MCF 10A (cell line): ENCODE measurements at regions of chr16 and their contacts with region 1.

Region 1: GRCh38 chr16:30407102-30407803 is at the start of gene ZNF771:
- DNase-seq: peak; percentile 93
- H3K4me3 Mint-ChIP-seq: peak within 1 kb of the TSS; percentile 81
- H3K27ac Mint-ChIP-seq: peak within 1 kb of the TSS; percentile 33
- H3K4me1 Mint-ChIP-seq: peaks cover 19% of the 10 kb centered on the region
- H3K27me3 Mint-ChIP-seq: peaks cover 11% of the 10 kb centered on the region
- CTCF ChIP-seq: no peak
- total RNA-seq, gene ZNF771: 8.1 and 8.3 TPM in 2 replicates

Region 2: DNA sequence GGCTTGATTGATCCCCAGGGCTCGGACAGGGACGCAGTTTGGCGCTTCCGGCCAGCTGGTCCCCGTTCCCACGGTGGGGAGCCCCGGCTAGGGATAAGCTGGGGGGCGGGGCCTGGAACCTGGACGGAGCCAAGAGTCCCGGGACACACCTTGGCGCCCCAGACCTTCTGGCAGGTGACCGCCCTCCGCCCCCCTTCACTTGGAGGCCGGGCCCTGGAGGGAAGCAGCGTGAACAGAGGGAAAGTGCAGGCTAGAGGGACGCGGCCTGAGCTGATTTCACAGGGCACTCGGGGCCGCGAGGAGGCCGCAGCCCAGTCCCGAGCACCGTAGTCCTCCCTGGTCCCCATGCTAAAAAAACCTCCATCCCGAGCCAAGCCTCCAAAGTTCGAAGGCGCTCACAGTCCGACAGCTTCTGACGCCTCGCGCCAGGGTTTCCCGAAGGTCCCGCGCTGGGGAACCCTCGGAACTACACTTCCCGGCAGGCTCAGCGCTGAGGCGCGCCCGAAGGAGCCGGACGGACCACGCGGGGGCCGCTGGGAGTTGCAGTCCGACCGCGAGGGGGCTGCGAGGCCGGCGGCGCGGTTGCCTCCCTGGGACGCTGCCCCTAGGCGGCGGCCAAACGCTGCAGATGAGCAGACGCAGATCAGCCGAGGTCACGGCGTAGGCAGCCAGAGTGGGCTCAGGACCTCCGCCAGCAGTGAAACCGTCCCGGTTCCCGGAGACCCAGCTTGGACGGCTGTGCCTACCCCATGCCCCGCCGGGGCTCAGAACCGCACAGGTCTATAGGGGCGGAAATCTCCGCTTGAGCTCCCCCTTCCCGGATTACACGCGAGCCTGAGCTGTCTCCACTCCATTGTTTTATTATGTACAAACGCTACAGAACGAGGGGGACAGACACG is 315.5 kb before region 1 on chr16 and contains the start of gene TBX6:
- CTCF ChIA-PET with region 1: interaction called, 3 read pairs
- POLR2A ChIA-PET with region 1: interaction called, 5 read pairs
- intact Hi-C with region 1: loop called (anchors 10 kb)
- DNase-seq: peak; percentile 89
- H3K4me3 Mint-ChIP-seq: peak within 1 kb of the TSS; percentile 79
- H3K27ac Mint-ChIP-seq: peak within 1 kb of the TSS; percentile 57
- H3K4me1 Mint-ChIP-seq: peaks cover 37% of the 10 kb centered on the region
- H3K27me3 Mint-ChIP-seq: no peaks in the 10 kb centered on the region
- CTCF ChIP-seq: peak; percentile 74
- total RNA-seq, gene TBX6: 0.16 and 0.47 TPM in 2 replicates

Region 3: DNA sequence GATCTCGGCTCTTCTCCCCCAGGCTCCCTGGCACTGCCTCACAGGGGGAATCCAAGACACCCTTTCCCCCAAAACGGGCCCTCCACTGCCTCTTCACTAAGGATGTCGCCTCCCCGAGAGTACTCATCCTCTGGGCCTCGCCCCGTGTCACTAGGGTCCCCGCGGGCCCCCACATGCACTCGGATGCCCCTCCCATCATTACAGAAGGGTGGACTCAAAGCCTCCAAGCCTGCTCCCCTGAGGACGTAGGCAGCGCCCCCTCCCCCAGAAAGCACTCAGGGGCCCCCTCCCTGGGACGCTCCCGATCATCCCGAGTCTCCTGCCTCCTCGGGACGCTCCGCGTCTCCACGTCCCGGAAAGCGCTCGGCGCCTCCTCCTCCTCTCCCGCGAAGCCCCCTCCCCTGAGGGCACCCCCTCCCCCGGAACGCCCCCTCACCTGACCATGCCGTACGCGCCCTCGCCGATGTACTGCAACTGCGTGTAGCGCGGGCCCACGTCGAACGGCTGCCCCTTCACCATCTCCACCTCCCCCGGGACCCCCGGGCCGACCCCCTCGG is 284.6 kb before region 1 on chr16:
- CTCF ChIA-PET with region 1: interaction called, 5 read pairs
- POLR2A ChIA-PET with region 1: no interaction called
- intact Hi-C with region 1: loop called (anchors 5 kb)
- DNase-seq: no peak
- H3K4me3 Mint-ChIP-seq: peak overlapping the region; percentile 73
- H3K27ac Mint-ChIP-seq: peak overlapping the region; percentile 63
- H3K4me1 Mint-ChIP-seq: peaks cover 10% of the 10 kb centered on the region
- H3K27me3 Mint-ChIP-seq: no peaks in the 10 kb centered on the region
- CTCF ChIP-seq: no peak

Region 4: DNA sequence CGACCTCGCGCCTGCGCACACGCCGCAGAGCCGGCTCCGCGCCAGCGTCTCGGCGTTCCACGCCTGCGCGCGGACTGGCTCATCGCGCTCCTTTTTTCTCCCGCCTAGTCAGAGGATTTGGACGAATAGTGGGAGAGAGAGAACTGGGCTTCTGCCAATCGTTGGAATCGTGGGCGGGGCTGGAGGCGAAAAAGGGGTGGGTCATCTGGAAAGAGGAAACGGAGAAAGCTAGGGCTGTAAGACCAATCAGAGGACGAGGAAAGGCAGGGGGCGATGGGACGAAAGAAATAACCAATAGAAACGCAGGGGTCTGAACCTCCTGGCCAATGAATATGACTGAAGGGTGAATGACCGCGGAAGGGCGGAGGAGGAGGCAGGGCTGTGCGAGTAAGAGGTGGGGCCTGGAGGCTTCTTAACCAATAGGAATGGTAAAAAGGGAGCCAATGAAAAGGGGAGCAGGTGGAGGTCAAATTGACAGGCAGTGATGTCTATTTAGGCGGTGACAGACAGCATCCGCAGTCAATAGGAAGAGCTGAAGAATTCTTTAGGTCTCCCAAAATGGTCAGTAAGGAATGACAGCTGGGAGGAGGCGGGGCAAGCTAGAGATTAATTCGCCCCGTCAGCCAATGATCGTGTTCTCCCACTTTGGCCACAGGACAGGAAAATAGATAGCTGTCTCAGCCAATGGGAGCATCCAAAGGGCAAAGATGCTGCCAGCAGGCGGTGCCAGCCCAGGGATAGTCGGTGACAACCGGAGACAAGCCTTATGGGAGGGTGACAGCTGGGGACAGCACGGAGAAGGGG is 36.6 kb before region 1 on chr16 and contains the start of gene TBC1D10B:
- CTCF ChIA-PET with region 1: interaction called, 11 read pairs
- POLR2A ChIA-PET with region 1: interaction called, 21 read pairs
- intact Hi-C with region 1: loop called (anchors 2 kb)
- DNase-seq: peak; percentile 100
- H3K4me3 Mint-ChIP-seq: peak within 1 kb of the TSS; percentile 78
- H3K27ac Mint-ChIP-seq: peak within 1 kb of the TSS; percentile 89
- H3K4me1 Mint-ChIP-seq: peaks cover 44% of the 10 kb centered on the region
- H3K27me3 Mint-ChIP-seq: no peaks in the 10 kb centered on the region
- CTCF ChIP-seq: no peak
- total RNA-seq, gene TBC1D10B: 46.5 and 48.0 TPM in 2 replicates

Region 5: GRCh38 chr16:30378236-30379204 is 28.7 kb before region 1 on chr16:
- CTCF ChIA-PET with region 1: interaction called, 9 read pairs
- POLR2A ChIA-PET with region 1: interaction called, 19 read pairs
- intact Hi-C with region 1: no loop called
- DNase-seq: peak; percentile 97
- H3K4me3 Mint-ChIP-seq: peak overlapping the region; percentile 92
- H3K27ac Mint-ChIP-seq: peak overlapping the region; percentile 99
- H3K4me1 Mint-ChIP-seq: peaks cover 13% of the 10 kb centered on the region
- H3K27me3 Mint-ChIP-seq: no peaks in the 10 kb centered on the region
- CTCF ChIP-seq: no peak

Region 6: DNA sequence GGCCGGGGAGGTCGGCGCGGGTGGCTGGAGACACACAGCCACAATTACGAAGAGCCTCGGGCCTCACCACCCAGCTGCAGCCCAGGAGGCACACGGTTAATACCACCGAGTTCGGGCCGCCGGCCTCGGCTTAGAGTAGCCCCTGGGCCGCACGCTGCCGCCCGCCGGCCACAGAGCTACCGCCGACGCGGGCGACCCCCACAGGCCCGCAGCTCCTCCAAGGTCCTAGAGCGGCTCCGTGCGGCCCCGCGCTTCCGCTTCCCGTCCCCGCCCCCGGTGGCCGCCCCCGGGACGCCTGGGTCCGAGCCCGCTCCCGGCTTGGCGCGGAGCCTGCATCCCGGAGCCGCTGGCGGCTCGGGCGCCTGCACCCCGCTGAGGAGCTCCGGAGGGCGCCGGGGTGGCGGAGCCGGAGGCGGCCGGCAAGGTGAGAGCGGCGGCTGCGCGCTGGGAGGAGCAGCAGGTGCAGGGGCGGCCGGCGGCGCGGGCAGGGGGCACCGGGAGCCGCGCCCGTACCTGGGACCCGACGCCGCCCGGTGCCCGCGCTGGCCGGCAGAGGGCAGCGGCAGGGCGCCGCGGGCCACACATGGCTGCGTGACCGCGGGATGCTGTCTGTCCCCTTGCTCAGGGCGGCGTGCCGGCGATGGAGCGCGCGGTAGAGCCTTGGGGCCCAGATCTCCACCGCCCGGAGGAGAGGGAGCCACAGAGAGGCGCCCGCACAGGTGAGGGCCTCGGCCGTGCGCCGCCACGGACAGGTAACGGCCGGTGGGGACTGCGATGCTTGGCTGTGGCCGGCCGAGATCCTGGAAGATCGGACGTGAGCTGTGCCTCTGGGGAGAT is 11.9 kb before region 1 on chr16 and contains the start of gene ZNF48:
- CTCF ChIA-PET with region 1: interaction called, 13 read pairs
- POLR2A ChIA-PET with region 1: interaction called, 66 read pairs
- intact Hi-C with region 1: no loop called
- DNase-seq: peak; percentile 56
- H3K4me3 Mint-ChIP-seq: peak within 1 kb of the TSS; percentile 83
- H3K27ac Mint-ChIP-seq: peak within 1 kb of the TSS; percentile 44
- H3K4me1 Mint-ChIP-seq: peaks cover 7% of the 10 kb centered on the region
- H3K27me3 Mint-ChIP-seq: no peaks in the 10 kb centered on the region
- CTCF ChIP-seq: peak; percentile 39
- total RNA-seq, gene ZNF48: 11.0 and 12.4 TPM in 2 replicates

Region 7: DNA sequence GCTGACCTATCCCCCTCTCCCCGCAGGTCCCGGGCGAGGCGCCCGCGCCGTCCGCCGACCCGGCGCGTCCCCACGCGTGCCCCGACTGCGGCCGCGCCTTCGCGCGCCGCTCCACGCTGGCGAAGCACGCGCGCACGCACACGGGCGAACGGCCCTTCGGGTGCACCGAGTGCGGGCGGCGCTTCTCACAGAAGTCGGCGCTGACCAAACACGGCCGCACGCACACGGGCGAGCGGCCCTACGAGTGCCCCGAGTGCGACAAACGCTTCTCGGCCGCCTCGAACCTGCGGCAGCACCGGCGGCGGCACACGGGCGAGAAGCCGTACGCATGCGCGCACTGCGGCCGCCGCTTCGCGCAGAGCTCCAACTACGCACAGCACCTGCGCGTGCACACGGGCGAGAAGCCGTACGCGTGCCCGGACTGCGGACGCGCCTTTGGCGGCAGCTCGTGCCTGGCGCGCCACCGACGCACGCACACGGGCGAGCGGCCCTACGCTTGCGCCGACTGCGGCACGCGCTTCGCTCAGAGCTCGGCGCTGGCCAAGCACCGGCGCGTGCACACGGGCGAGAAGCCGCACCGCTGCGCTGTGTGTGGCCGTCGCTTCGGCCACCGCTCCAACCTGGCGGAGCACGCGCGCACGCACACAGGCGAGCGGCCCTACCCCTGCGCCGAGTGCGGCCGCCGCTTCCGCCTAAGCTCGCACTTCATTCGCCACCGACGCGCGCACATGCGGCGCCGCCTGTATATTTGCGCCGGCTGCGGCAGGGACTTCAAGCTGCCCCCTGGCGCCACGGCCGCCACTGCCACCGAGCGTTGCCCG is 10.5 kb after region 1 on chr16:
- CTCF ChIA-PET with region 1: interaction called, 9 read pairs
- POLR2A ChIA-PET with region 1: interaction called, 11 read pairs
- intact Hi-C with region 1: no loop called
- DNase-seq: peak; percentile 74
- H3K4me3 Mint-ChIP-seq: peak overlapping the region; percentile 58
- H3K27ac Mint-ChIP-seq: no peak overlapping the region
- H3K4me1 Mint-ChIP-seq: peaks cover 4% of the 10 kb centered on the region
- H3K27me3 Mint-ChIP-seq: no peaks in the 10 kb centered on the region
- CTCF ChIP-seq: no peak